ENCODE measurements at regions of chr18 and their contacts with region 1.

Region 1: GRCh38 chr18:59070181-59070912 is 69.3 kb upstream of the SEC11C start:
- DNase-seq: peak; percentile 90
- ATAC-seq: peak; percentile 93

Region 2: DNA sequence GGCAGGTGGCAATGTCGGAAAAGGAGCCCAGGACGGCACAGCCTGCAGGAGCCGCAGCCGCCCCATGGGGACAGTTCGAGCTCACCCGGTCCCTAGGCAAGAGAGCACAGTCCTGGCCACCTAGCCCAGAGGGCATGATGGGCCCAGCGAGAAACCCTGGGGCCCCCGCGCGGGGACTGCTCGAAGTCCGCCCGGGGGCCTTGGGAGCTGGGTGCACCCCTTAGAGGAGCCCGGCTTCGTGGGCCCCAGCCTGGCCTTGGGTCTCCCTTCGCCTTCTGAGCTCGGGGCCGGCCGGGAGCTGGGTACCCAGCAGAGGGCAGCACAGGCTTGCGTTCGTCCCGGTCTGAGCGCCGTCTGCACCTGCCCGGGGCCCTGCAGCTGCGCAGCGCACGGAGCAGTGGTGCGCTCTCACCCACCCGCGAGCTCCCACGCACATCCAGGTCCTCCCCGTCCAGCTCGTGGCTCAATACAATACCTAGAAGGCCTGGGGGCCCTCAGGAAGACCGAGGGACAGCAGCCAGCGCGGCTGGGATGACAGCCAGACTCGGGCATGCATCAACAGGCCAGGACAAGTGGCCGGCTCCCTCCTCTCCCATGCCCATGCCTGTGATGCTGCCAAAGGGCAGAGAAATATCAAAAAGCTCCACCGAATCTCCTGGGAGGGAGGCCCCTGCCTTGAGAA is 301.9 kb before region 1 on chr18:
- intact Hi-C with region 1: loop called (anchors 5 kb)
- DNase-seq: peak; percentile 84
- ATAC-seq: peak; percentile 93

Region 3: DNA sequence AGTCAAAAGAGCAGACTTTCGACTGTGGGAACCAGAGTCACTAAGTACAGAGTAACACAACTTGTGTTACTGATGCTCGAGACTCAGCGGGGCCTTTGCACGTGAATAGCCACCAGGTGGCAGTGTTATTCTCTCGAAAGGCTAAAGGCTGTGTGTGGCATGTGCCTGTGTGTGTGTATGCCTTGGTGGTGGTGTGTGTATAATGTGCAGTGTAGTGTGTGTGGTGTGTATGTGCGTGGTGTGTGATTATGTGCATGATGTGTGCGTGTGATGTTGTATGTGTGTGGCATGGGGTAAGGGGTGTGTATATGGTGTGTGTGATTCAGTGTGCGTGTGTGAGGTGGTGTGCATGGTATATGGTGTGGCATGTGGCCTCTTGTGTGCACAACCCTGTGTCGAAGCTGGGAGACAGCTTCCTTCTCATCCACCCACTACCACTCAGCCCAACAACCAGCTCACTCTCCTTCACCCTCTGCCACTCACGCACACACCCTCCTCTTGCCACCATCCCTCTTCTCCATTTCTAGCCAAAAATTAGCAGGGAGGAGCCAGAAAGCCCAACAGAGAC is 288.6 kb before region 1 on chr18:
- intact Hi-C with region 1: loop called (anchors 2 kb)
- DNase-seq: peak; percentile 71
- ATAC-seq: peak; percentile 94

Region 4: DNA sequence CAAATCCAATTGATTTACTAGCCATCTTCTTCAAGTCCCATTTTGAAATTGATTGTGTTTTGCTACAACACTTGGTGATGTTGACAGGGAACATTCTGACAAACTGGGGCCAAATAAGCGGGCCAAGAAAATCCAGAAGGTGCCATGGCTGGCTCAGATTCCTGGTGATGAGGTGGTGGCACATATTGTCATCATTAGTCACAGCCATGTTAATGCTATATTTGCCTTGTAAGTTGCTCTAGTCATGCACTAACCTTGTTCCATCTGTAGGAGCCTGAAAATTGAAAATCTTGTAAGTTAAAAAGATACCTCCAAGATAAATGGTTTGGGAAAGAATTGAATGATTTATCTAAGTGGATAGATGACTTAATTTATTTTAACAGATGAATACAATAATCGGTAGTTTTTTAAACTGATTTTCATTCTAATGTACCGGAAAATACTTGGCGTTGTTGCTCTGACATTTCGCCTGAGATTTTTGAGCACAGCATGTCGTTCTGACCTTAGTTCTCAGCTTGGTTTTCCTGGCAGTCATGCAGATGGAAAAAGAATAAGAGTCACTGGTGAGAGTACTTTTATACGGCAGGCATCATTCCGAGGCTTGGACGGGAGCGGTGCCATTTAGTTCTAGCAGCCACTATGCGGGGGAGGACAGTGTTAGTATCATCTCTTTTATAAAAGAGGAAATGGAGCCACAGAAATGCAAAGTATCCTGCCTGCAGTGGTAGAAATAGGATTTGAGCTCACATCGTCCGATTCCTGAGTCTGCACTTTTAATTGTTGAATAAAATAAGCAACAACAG is 71.7 kb before region 1 on chr18:
- intact Hi-C with region 1: loop called (anchors 10 kb)
- DNase-seq: peak; percentile 78
- ATAC-seq: peak; percentile 89

Region 5: DNA sequence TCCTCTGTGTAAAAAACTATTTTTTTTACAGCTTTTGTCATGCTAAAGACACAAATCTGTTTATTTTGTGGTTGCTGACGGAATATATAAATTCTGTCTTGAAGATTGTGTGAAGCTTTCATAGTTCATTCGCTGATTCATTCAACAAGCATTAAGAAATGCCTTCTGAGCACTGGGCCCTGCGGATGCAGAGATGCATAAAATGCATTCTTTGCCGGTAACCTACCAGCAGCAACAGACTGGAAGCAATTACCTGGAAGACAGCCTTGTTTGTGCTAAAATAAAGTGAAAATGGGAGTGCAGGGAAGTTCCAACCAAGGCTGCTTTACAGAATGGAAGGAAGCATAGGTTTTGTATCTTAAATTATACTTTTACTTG is 949.1 kb after region 1 on chr18:
- intact Hi-C with region 1: no loop called
- DNase-seq: no peak
- ATAC-seq: no peak

Measured in left ventricle myocardium superior (tissue), 1 donor.